OCI-LY7 (cell line): ENCODE measurements at regions of chr6 and their contacts with region 1.

Region 1: GRCh38 chr6:42642794-42643193 is 79.0 kb downstream of the UBR2 start:
- DNase-seq: no peak
- H3K4me3 ChIP-seq: no peak overlapping the region
- H3K27ac ChIP-seq: no peak overlapping the region
- H3K4me1 ChIP-seq: no peaks in the 10 kb centered on the region
- CTCF ChIP-seq: no peak

Region 2: DNA sequence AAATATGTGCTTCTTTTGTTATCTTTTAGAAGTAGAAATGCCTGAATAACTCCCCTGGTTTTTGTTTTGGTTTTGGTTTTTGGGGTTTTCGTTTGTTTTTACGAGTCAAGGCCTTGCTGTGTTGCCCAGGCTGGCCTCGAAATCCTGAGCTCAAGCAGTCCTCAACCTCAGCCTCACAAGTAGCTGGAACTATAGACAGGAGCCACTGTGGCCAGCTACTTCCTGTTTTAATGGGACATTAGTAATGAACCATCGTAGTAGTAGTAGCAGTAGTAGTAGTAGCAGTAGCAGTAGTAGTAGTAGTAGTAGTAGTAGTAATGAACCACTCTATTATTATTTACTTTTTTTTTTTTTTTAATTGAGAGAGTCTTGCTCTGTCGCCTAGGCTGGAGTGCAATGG is 12.9 kb before region 1 on chr6:
- CTCF ChIA-PET with region 1: no interaction called
- POLR2A ChIA-PET with region 1: no interaction called
- intact Hi-C with region 1: no loop called
- DNase-seq: no peak
- H3K4me3 ChIP-seq: no peak overlapping the region
- H3K27ac ChIP-seq: no peak overlapping the region
- H3K4me1 ChIP-seq: no peaks in the 10 kb centered on the region
- CTCF ChIP-seq: no peak

Region 3: GRCh38 chr6:42790549-42791181 is 147.9 kb after region 1 on chr6:
- CTCF ChIA-PET with region 1: no interaction called
- POLR2A ChIA-PET with region 1: no interaction called
- intact Hi-C with region 1: no loop called
- DNase-seq: no peak
- H3K4me3 ChIP-seq: no peak overlapping the region
- H3K27ac ChIP-seq: peak overlapping the region; percentile 28
- H3K4me1 ChIP-seq: peaks cover 46% of the 10 kb centered on the region
- CTCF ChIP-seq: no peak

Region 4: DNA sequence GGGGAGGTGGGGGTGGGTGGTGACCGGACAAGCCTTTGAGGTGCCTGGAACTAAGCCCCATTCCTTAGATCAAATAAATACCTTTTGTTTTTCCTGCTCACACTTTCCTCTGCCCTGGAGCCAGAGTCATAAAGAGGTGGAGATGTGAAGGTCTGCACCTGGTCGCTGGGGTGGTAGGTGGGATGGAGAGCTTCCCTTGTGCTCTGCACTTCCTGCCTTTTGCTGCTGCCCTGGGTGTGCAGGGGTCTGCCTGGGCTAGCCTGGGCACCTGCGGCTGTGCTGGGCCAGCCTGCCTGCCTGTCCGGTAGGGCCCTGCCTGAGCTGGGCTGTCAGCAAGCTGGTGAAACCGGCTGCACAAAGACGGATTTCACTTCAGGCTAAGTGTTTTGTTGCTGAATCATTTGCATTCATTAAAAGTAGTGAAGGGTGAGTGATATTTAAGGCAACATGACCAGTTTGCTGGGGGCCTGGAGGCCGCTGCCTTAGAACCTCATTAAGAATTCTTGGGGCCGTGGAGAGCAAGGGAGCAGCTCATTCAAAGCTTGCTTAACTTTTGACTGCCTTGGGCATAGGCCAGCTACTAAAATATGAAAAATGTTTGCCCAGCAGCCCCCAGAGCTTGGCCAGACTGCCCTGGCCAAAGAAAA is 453.8 kb after region 1 on chr6:
- CTCF ChIA-PET with region 1: interaction called, 23 read pairs
- POLR2A ChIA-PET with region 1: no interaction called
- intact Hi-C with region 1: no loop called
- DNase-seq: peak; percentile 58
- H3K4me3 ChIP-seq: peak overlapping the region; percentile 44
- H3K27ac ChIP-seq: peak overlapping the region; percentile 41
- H3K4me1 ChIP-seq: peaks cover 26% of the 10 kb centered on the region
- CTCF ChIP-seq: no peak